Prostate gland (tissue), 2 donors: ENCODE measurements at regions of chr11 and their contacts with region 1.

Region 1: GRCh38 chr11:82980292-82980691 is 78.8 kb downstream of the DDIAS start:
- DNase-seq: no peak
- H3K4me3 ChIP-seq: no peak overlapping the region
- H3K27ac ChIP-seq: no peak overlapping the region
- H3K4me1 ChIP-seq: no peaks in the 10 kb centered on the region
- H3K27me3 ChIP-seq: no peaks in the 10 kb centered on the region
- CTCF ChIP-seq: no peak
- POLR2A ChIP-seq: no peak

Region 2: DNA sequence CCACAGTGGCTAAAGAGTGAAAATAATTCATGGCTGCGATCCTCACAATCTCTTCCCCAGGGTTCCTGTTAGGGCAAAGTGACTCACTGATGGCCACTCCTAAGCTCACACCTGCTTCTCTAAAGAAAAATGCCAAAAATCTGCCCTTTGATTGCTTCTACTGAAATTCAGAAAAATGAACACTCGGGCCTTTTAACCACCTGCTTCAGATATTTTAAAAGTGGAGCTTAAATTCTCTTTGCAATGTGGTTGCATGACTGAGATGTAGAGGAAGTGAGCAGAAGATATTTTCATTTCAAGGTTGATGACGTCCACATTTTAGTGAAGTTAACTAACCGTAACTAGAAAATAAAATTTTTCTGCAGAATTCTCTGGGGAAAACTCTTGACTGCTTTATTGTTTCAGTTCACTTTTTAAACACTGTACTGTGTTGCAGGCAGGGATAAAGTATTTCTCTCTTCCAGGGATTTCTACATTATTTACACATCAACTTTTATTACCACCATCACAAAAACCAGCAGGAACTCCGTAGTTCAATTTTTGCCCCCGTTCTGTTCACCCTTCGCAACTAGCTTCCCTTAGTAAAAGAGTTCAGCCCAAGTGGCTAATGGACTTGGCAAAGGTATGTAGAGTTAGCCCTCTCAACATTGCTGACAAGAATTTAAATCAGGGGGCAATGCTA is 82.9 kb after region 1 on chr11:
- intact Hi-C with region 1: loop called (anchors 10 kb)
- DNase-seq: no peak
- H3K4me3 ChIP-seq: no peak overlapping the region
- H3K27ac ChIP-seq: no peak overlapping the region
- H3K4me1 ChIP-seq: no peaks in the 10 kb centered on the region
- H3K27me3 ChIP-seq: no peaks in the 10 kb centered on the region
- CTCF ChIP-seq: no peak
- POLR2A ChIP-seq: no peak